ENCODE measurements at regions of chr20 and their contacts with region 1.

Region 1: DNA sequence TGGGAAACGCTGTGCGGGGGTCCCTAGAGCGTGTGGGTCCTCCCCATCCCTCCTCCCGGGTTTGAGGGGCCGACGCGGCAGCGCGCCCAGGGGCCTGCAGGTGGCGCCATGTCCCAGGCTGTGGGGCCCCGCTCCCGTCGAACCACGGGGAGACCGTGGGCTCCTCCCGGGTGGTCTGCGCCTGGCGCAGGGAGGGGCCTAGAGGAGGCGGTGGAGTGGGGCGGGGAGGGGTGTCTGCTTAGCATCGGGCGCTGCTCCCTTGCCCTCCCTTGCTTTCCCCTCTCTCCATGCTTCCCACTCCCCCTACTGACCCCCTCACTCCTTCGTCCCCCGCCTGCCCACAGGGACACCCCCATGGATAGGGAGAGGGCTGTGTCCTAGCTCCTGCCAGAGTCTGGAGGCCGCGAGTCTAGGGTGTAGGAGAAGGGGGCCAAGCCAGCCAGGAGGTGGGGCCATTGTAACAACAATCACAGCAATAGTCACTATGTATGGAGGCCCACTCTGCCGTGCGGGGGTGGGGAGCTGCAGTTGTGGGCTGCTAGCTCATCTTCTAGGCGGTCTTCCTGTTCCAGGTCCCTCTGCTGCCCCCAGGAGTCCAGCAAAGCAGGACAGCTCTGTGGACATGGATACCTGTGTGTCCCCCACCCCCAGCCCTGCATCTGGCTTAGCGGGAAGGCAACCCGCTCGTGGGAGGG is 51.7 kb downstream of the CHMP4B start:
- DNase-seq: peak; percentile 63
- ATAC-seq: peak; percentile 52
- H3K4me3 Mint-ChIP-seq: no peak overlapping the region
- H3K27ac Mint-ChIP-seq: no peak overlapping the region
- H3K4me1 Mint-ChIP-seq: peaks cover 38% of the 10 kb centered on the region
- H3K27me3 Mint-ChIP-seq: no peaks in the 10 kb centered on the region

Region 2: GRCh38 chr20:33883164-33883563 is 20.3 kb after region 1 on chr20:
- CTCF ChIA-PET with region 1: no interaction called
- POLR2A ChIA-PET with region 1: no interaction called
- DNase-seq: no peak
- ATAC-seq: no peak
- H3K4me3 Mint-ChIP-seq: no peak overlapping the region
- H3K27ac Mint-ChIP-seq: no peak overlapping the region
- H3K4me1 Mint-ChIP-seq: peaks cover 3% of the 10 kb centered on the region
- H3K27me3 Mint-ChIP-seq: peaks cover 2% of the 10 kb centered on the region

Region 3: DNA sequence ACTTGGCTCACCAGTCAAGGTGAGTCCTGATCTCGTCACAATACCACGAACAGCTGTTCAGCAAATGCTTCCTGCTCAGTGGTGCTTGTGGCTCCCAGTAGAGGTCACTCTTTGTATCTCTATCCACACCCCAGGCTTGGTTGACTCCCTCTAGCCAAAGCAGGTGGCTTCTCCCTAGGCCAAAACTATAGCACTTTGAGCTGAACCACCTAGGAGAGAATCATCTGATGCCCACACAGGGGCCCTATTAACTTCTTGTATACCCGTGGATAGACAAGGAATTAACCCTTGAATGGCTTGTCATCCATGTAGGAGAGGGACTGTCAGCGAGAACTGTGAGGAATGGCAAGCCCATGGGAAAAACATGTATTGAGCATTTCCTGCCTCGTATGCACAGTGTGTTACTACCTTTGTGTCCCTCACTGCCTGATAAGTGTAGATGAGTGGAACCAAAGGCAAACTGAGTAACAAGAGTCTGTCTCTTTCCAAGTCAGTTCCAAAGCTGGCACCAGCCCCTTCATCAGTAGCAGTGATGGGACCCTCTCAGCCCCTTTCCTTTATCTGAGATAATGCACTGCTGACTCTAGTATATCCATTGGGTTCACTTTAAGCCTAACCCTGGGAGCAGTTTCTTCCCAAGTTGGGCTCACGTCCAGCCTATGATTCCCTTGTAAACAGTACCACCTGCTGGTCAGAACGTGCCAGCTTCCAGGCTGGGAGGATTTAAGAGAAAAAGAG is 206.7 kb after region 1 on chr20:
- CTCF ChIA-PET with region 1: interaction called, 16 read pairs
- POLR2A ChIA-PET with region 1: no interaction called
- DNase-seq: peak; percentile 67
- ATAC-seq: peak; percentile 78
- H3K4me3 Mint-ChIP-seq: no peak overlapping the region
- H3K27ac Mint-ChIP-seq: no peak overlapping the region
- H3K4me1 Mint-ChIP-seq: peaks cover 19% of the 10 kb centered on the region
- H3K27me3 Mint-ChIP-seq: no peaks in the 10 kb centered on the region

Region 4: DNA sequence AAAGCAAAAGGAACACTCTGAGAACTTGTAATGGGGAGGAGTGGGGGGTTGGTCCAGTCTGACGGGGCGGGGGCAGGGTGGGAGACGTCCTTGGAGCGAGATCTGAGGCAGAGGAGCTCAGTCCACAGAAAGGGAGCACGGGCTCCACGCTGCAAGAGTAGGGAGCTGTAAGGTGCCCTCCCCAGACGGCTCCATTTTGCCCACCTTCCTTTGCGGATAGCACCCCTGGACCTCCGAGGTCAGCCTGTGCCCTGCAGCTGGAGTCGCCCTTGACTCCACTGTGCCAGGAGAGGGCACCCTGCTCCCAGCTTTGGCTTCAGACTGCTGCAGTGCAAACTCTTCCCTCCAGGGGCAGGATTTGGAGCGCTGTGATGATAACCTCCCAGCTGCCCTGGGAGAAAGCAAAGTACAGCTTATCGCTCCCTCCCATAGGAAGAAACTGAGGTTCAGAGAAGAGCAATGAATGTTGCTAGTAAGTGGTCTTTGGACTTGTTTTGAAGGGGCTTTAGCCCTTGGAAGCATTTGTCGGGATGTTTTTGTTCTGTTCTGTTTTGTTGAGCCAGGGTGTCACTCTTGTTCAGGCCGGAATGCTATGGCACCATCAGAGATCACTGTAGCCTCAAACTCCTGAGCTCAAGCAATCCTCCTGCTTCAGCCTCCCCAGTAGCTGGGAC is 449.8 kb after region 1 on chr20:
- CTCF ChIA-PET with region 1: no interaction called
- POLR2A ChIA-PET with region 1: no interaction called
- DNase-seq: peak; percentile 93
- ATAC-seq: peak; percentile 100
- H3K4me3 Mint-ChIP-seq: peak overlapping the region; percentile 22
- H3K27ac Mint-ChIP-seq: no peak overlapping the region
- H3K4me1 Mint-ChIP-seq: peaks cover 21% of the 10 kb centered on the region
- H3K27me3 Mint-ChIP-seq: peaks cover 24% of the 10 kb centered on the region

Measured in activated CD8-positive, alpha-beta T cell treated with anti-CD3 and anti-CD28 coated beads, Interleukin-2, amount 10 ng/mL, durations not matched to agents 7 days and 5 days (primary cell).